ENCODE measurements at regions of chr3 and their contacts with region 1.

Region 1: DNA sequence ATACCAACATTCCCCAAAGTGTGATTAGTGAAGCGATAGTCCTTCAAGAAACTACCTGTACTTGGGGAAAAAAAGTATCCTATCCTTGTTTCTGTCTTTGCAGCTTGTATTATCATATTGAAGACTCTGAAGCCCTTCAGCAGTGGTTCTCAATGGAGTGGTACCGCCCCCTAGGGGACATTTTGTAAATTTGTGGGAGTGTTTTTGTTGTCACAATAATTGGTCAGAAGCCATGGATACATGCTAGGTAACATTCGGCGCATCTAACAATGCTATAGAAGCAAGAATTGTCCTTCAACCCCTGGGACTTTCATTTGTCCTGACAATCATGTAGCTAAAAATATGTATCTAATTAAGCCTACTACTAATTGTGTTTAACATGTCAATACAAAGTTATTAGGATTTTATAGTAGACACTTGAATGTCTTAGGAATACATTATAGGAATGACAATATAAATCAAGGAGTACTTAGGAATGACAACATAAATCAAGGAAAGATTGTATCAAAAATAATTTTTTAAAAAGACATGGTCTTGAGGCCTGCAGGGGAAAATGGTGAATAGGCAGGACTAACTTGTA is 53.7 kb downstream of the NMD3 start:
- DNase-seq: no peak
- H3K4me3 ChIP-seq: no peak overlapping the region
- CTCF ChIP-seq: peak; percentile 47

Region 2: DNA sequence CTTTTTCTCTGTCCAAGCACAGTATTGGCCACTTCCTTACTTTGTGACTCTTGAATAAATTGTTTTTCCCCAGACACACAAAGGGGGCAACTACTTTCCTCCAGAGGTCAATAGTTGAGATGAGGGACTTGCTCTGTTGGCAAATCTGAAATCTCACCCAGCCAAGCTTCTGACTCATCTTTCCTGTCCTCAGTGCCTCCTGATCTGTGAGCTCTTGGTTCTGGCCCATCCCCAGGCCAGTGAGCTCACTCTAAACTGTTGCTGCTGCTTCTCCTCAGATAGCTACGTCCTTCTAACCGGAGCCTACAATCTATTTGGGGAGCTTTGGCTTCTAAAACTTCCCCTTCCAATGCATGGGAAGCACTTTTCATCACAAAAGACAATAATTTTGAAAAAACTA is 103.7 kb before region 1 on chr3:
- CTCF ChIA-PET with region 1: no interaction called
- POLR2A ChIA-PET with region 1: no interaction called
- DNase-seq: peak; percentile 50
- H3K4me3 ChIP-seq: no peak overlapping the region
- CTCF ChIP-seq: no peak

Region 3: DNA sequence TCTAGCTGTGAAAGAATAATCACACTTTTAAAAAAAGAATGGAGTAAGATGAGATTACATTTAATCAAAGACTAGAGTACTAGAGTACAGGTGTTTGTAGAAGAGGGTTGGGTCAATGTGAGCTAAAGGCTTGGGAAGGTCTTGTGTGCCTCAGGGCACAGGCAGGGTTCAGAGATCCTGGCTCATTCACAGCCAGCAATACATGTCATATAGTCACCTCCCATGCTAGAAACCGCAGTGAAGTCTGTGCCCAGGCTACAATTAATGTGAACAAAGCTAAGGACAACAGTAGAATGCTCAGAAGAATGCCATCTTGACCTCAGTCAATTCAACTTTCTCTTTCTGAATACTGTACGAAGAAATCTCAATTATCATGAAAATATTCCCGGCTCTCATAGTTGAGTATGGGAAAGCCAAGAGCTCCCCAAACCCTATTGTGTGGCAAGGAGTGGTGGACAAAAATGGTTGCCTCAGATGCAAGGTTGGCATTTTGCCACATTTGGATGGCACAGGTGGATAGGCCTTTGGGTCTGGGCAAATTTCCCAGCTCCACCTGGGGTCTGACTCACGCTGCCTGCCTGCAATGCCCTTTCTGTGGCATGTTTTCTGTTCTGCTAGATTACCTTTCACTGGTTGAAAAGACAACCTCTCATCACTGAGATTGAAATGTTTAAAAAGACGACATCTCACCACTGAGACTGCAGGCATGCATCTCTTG is 16.5 kb after region 1 on chr3:
- CTCF ChIA-PET with region 1: interaction called, 15 read pairs
- POLR2A ChIA-PET with region 1: no interaction called
- DNase-seq: no peak
- H3K4me3 ChIP-seq: no peak overlapping the region
- CTCF ChIP-seq: no peak

Region 4: GRCh38 chr3:161409069-161409468 is 134.3 kb after region 1 on chr3:
- CTCF ChIA-PET with region 1: interaction called, 15 read pairs
- POLR2A ChIA-PET with region 1: no interaction called
- DNase-seq: no peak
- H3K4me3 ChIP-seq: no peak overlapping the region
- CTCF ChIP-seq: peak; percentile 39

Region 5: GRCh38 chr3:161423911-161424522 is 149.2 kb after region 1 on chr3:
- CTCF ChIA-PET with region 1: interaction called, 41 read pairs
- POLR2A ChIA-PET with region 1: no interaction called
- DNase-seq: no peak
- H3K4me3 ChIP-seq: no peak overlapping the region
- CTCF ChIP-seq: peak; percentile 30